ENCODE measurements at regions of chr6 and their contacts with region 1.

Region 1: GRCh38 chr6:78951471-78951870 is 84.1 kb downstream of the IRAK1BP1 start:
- DNase-seq: no peak
- ATAC-seq: no peak

Region 2: GRCh38 chr6:78770766-78771165 is 180.7 kb before region 1 on chr6:
- intact Hi-C with region 1: no loop called
- DNase-seq: no peak
- ATAC-seq: no peak

Region 3: DNA sequence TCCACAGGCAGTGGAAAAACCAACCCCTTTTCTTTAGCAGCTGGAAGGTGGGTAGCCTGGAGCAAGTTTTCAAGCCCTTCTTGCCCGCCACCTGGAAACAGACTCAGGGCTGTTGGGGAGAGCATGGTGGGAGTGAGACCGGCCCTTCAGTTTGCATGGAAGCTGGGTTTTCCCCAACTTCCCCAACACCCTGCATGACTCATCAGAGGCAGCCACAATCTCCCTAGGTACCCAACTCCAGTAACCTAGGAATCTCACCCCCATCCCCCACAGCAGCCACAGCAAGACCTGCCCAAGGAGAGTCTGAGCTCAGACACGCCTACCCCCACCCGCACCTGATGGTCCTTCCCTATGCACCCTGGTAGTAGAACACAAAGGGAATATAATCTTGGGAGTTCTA is 170.5 kb before region 1 on chr6:
- intact Hi-C with region 1: no loop called
- DNase-seq: no peak
- ATAC-seq: no peak

Region 4: GRCh38 chr6:78999737-79000136 is 48.3 kb after region 1 on chr6:
- intact Hi-C with region 1: loop called (anchors 10 kb)
- DNase-seq: no peak
- ATAC-seq: no peak